ENCODE measurements at regions of chr5 and their contacts with region 1.

Region 1: GRCh38 chr5:72387985-72388384 is 67.8 kb downstream of the PTCD2 start:
- DNase-seq: peak; percentile 20 to 84
- H3K4me3 ChIP-seq: no peak overlapping the region
- H3K27ac ChIP-seq: peak overlapping the region; percentile 93
- H3K4me1 ChIP-seq: peaks cover 51% of the 10 kb centered on the region
- H3K27me3 ChIP-seq: no peaks in the 10 kb centered on the region
- CTCF ChIP-seq: no peak

Region 2: DNA sequence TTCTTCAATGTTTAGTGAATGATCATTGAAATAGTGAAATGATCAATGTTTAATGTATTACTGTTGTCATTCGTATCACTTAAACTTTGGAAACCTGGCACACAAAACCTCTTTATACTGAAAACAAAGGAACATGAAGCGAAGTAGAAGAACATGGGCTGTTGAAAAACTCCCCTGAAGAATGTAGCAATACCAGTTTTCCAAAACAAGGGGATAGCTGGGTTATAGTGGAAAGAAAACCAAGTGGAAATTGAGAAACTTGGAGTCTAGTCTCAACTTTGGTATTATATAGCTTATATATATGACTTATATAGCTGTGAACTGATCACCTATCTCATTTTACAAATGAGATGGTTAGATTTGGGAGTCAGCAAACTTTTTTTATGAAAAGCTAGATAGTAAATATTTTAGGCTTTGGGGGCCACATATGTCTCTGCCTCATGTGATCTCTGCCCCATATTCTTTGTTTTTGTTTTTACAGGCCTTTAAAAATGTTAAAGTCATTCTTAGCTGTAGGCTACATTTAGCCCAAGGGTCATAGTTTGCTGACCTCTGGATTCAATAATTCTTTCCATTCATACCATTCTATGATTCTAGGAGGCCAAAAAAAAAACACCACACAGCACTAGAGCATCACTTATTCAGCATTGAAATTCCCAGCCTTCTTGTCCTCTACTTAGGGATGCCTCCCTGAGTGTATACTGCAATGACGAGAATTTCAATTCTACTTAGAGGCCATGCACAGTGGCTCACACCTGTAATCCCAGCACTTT is 51.0 kb before region 1 on chr5:
- CTCF ChIA-PET with region 1: no interaction called
- POLR2A ChIA-PET with region 1: interaction called, 19 read pairs
- intact Hi-C with region 1: no loop called
- DNase-seq: no peak
- H3K4me3 ChIP-seq: no peak overlapping the region
- H3K27ac ChIP-seq: no peak overlapping the region
- H3K4me1 ChIP-seq: peaks cover 14% of the 10 kb centered on the region
- H3K27me3 ChIP-seq: no peaks in the 10 kb centered on the region
- CTCF ChIP-seq: no peak

Region 3: GRCh38 chr5:72427488-72428437 is 39.8 kb after region 1 on chr5:
- CTCF ChIA-PET with region 1: no interaction called
- POLR2A ChIA-PET with region 1: no interaction called
- intact Hi-C with region 1: no loop called
- DNase-seq: no peak
- H3K4me3 ChIP-seq: no peak overlapping the region
- H3K27ac ChIP-seq: no peak overlapping the region
- H3K4me1 ChIP-seq: no peaks in the 10 kb centered on the region
- H3K27me3 ChIP-seq: no peaks in the 10 kb centered on the region
- CTCF ChIP-seq: no peak

Region 4: GRCh38 chr5:72624641-72625236 is 236.8 kb after region 1 on chr5:
- CTCF ChIA-PET with region 1: no interaction called
- POLR2A ChIA-PET with region 1: no interaction called
- intact Hi-C with region 1: no loop called
- DNase-seq: no peak
- H3K4me3 ChIP-seq: no peak overlapping the region
- H3K27ac ChIP-seq: no peak overlapping the region
- H3K4me1 ChIP-seq: no peaks in the 10 kb centered on the region
- H3K27me3 ChIP-seq: no peaks in the 10 kb centered on the region
- CTCF ChIP-seq: no peak

Region 5: GRCh38 chr5:72788866-72789505 is 401.0 kb after region 1 on chr5:
- CTCF ChIA-PET with region 1: no interaction called
- POLR2A ChIA-PET with region 1: no interaction called
- intact Hi-C with region 1: no loop called
- DNase-seq: peak in 1 of 2 experiments; percentile 53
- H3K4me3 ChIP-seq: no peak overlapping the region
- H3K27ac ChIP-seq: no peak overlapping the region
- H3K4me1 ChIP-seq: peaks cover 10% of the 10 kb centered on the region
- H3K27me3 ChIP-seq: no peaks in the 10 kb centered on the region
- CTCF ChIP-seq: no peak

Region 6: GRCh38 chr5:74342948-74343682 is 1955.1 kb after region 1 on chr5:
- CTCF ChIA-PET with region 1: no interaction called
- POLR2A ChIA-PET with region 1: no interaction called
- intact Hi-C with region 1: no loop called
- DNase-seq: peak in 1 of 2 experiments; percentile 52
- H3K4me3 ChIP-seq: no peak overlapping the region
- H3K27ac ChIP-seq: peak overlapping the region; percentile 60
- H3K4me1 ChIP-seq: peaks cover 39% of the 10 kb centered on the region
- H3K27me3 ChIP-seq: no peaks in the 10 kb centered on the region
- CTCF ChIP-seq: no peak

Measured in PC-9 (cell line).